Calu3 (cell line): ENCODE measurements at regions of chr17 and their contacts with region 1.

Region 1: DNA sequence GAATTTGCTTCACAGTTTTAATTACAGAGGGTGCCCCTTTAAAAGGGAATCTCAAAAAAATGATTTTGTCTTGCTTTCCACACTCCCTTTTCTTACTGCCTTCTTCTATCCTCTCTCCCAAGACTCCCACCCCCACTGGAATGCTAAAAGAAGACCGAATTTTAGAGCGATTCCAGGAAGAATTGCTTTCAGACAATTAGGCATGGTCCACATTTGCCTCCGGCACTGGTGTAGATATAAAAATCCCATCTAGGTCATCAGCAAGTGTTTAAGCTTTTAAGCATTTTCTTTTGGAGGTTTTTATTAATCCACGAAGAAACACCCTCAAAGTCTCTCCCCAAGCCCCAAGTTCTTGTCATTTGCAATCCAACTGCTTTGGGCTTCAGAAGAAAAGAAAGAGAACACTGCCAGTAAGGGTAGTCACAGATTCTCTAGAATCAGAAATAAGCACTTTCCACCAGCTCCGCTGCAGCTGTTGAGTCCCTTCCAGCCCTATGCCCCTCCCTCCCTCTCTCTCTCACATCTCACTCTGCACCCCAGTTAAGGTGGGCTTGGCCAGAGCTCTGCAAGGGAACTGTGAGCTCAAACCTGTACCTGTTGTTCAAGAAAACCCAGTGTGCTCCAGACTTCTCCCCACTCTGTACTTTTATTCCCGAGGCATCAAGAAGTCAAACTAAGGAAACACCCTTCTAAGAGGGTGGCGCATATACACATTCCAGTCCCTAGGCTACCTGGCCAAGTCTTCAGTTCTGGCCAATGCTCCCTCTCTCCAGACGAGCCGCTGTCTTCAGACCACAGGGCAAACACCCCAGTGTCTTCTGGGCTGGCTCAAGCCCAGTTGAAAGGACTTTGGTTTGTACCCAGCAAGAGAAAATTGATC is 170.2 kb downstream of the RGS9 start:
- DNase-seq: no peak
- H3K4me3 Mint-ChIP-seq: no peak overlapping the region
- H3K27ac Mint-ChIP-seq: no peak overlapping the region
- H3K4me1 Mint-ChIP-seq: no peaks in the 10 kb centered on the region
- H3K27me3 Mint-ChIP-seq: peaks cover 50% of the 10 kb centered on the region
- CTCF ChIP-seq: no peak

Region 2: GRCh38 chr17:64369007-64369893 is 938.1 kb before region 1 on chr17:
- CTCF ChIA-PET with region 1: no interaction called
- intact Hi-C with region 1: no loop called
- DNase-seq: no peak
- H3K4me3 Mint-ChIP-seq: no peak overlapping the region
- H3K27ac Mint-ChIP-seq: no peak overlapping the region
- H3K4me1 Mint-ChIP-seq: no peaks in the 10 kb centered on the region
- H3K27me3 Mint-ChIP-seq: no peaks in the 10 kb centered on the region
- CTCF ChIP-seq: no peak

Region 3: DNA sequence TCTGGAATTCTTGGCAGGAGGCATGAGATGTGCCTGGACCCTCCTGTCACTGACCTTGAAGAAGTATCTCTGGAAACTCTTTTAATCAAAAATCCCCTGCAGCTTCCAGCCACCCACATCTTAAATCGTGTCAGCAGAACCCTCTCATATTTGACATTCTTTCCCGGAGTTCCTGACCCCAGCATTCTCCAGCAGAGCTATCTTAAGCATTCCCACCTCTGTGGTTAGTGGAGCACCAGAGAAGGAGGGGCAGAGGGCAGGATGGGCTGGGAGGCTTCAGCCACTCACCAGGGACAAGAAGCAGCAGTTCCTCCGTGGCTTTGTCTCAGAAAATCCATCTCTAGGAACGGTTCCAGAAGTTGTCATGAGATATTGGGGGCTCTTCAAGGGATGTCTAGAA is 20.3 kb before region 1 on chr17:
- CTCF ChIA-PET with region 1: interaction called, 3 read pairs
- intact Hi-C with region 1: loop called (anchors 1 kb)
- DNase-seq: no peak
- H3K4me3 Mint-ChIP-seq: no peak overlapping the region
- H3K27ac Mint-ChIP-seq: no peak overlapping the region
- H3K4me1 Mint-ChIP-seq: no peaks in the 10 kb centered on the region
- H3K27me3 Mint-ChIP-seq: peaks cover 47% of the 10 kb centered on the region
- CTCF ChIP-seq: no peak

Region 4: GRCh38 chr17:65324611-65325342 is 17.5 kb after region 1 on chr17:
- CTCF ChIA-PET with region 1: no interaction called
- intact Hi-C with region 1: no loop called
- DNase-seq: no peak
- H3K4me3 Mint-ChIP-seq: no peak overlapping the region
- H3K27ac Mint-ChIP-seq: no peak overlapping the region
- H3K4me1 Mint-ChIP-seq: no peaks in the 10 kb centered on the region
- H3K27me3 Mint-ChIP-seq: no peaks in the 10 kb centered on the region
- CTCF ChIP-seq: no peak